ENCODE measurements at regions of chr3 and their contacts with region 1.

Region 1: GRCh38 chr3:52253314-52254304 is 8.1 kb downstream of the PPM1M start:
- DNase-seq: peak; percentile 87
- H3K4me3 Mint-ChIP-seq: peak overlapping the region; percentile 72
- H3K27ac Mint-ChIP-seq: peak overlapping the region; percentile 99
- H3K4me1 Mint-ChIP-seq: peaks cover 85% of the 10 kb centered on the region
- H3K27me3 Mint-ChIP-seq: no peaks in the 10 kb centered on the region

Region 2: DNA sequence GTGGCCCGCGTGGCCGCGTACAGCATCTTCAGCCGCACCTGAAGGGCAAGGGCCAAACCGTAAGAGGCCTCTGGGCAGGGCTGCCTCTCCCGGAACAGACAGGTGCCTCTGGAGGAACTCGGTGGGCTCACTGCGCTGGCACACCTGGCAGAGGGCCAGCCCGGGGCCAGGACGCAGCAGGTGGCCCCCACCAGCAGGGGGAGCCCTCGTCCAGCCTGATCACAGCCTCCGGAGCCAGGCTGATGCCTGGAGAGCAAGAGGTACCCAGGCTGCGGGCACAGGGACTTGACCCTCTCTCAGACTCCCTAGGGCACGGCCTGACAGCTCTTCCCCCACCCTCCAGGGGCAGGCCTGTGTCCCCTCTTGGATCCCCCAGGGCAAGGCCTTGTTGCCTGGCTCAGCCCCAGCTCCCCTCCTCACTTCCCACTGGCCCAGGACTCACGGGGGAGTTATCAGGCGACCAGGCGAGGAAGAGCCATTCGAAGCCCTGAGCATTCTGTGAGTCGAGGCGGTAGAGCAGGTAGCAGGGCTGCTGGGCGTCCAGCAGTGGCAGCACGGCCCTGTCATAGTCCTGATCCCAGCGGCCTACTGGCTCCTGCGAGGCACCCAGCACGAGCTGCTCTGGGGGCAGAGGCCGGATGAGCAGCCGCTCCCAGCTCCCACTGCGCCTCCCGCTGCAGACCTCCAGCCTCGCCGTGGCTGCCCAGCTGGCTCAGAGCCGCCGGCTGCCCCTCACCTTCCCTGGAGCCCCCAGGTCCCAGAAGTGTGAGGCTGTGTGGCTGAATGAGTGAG is 21.9 kb before region 1 on chr3:
- CTCF ChIA-PET with region 1: interaction called, 28 read pairs
- POLR2A ChIA-PET with region 1: interaction called, 313 read pairs
- DNase-seq: peak; percentile 87
- H3K4me3 Mint-ChIP-seq: no peak overlapping the region
- H3K27ac Mint-ChIP-seq: peak overlapping the region; percentile 63
- H3K4me1 Mint-ChIP-seq: peaks cover 45% of the 10 kb centered on the region
- H3K27me3 Mint-ChIP-seq: no peaks in the 10 kb centered on the region

Region 3: GRCh38 chr3:52238761-52239701 is 14.6 kb before region 1 on chr3 and contains the start of gene TWF2:
- CTCF ChIA-PET with region 1: interaction called, 48 read pairs
- POLR2A ChIA-PET with region 1: interaction called, 313 read pairs
- DNase-seq: peak; percentile 87
- H3K4me3 Mint-ChIP-seq: peak within 1 kb of the TSS; percentile 95
- H3K27ac Mint-ChIP-seq: peak within 1 kb of the TSS; percentile 97
- H3K4me1 Mint-ChIP-seq: peaks cover 77% of the 10 kb centered on the region
- H3K27me3 Mint-ChIP-seq: no peaks in the 10 kb centered on the region
- total RNA-seq, gene TWF2: 118 to 119 TPM

Region 4: GRCh38 chr3:52350416-52350815 is 96.8 kb after region 1 on chr3:
- CTCF ChIA-PET with region 1: no interaction called
- POLR2A ChIA-PET with region 1: no interaction called
- DNase-seq: no peak
- H3K4me3 Mint-ChIP-seq: no peak overlapping the region
- H3K27ac Mint-ChIP-seq: no peak overlapping the region
- H3K4me1 Mint-ChIP-seq: no peaks in the 10 kb centered on the region
- H3K27me3 Mint-ChIP-seq: no peaks in the 10 kb centered on the region

Region 5: GRCh38 chr3:52670621-52671521 is 417.3 kb after region 1 on chr3:
- CTCF ChIA-PET with region 1: no interaction called
- POLR2A ChIA-PET with region 1: no interaction called
- DNase-seq: peak; percentile 71
- H3K4me3 Mint-ChIP-seq: peak overlapping the region; percentile 43
- H3K27ac Mint-ChIP-seq: peak overlapping the region; percentile 86
- H3K4me1 Mint-ChIP-seq: peaks cover 30% of the 10 kb centered on the region
- H3K27me3 Mint-ChIP-seq: no peaks in the 10 kb centered on the region